ENCODE measurements at regions of chr9 and their contacts with region 1.

Region 1: GRCh38 chr9:107282753-107283625 is at the start of gene RAD23B:
- DNase-seq: peak; percentile 96
- ATAC-seq: peak; percentile 91
- H3K4me3 ChIP-seq: peak within 1 kb of the TSS; percentile 94
- H3K27ac ChIP-seq: peak within 1 kb of the TSS; percentile 93
- H3K4me1 ChIP-seq: peaks cover 29% of the 10 kb centered on the region
- H3K27me3 ChIP-seq: no peaks in the 10 kb centered on the region
- CTCF ChIP-seq: no peak
- total RNA-seq, gene RAD23B: 67.9 and 74.6 TPM in 2 replicates

Region 2: DNA sequence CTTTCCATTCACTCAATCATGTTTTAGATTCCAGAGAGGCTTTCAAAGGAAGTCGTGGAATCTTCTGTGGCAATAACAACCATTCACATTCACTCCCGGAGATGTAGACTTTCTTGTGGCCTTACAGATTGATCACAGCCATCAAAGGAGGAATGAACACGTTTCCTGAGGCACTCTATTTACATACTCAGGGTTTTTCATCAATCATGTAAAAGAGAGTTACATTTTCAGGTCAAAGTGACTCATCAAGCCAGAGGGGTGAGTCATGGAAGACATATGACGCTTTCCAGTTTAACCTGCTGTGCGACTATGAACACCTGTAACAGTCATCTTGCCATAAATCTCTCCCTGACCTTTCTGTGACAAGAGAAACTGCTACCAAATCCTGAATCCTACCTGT is 39.2 kb before region 1 on chr9:
- CTCF ChIA-PET with region 1: interaction called, 4 read pairs
- POLR2A ChIA-PET with region 1: interaction called, 3 read pairs
- intact Hi-C with region 1: loop called (anchors 1 kb)
- DNase-seq: peak; percentile 96
- ATAC-seq: peak; percentile 82
- H3K4me3 ChIP-seq: peak overlapping the region; percentile 12; the same call in 1 of the 2 replicates
- H3K27ac ChIP-seq: peak overlapping the region; percentile 87
- H3K4me1 ChIP-seq: peaks cover 38% of the 10 kb centered on the region
- H3K27me3 ChIP-seq: no peaks in the 10 kb centered on the region
- CTCF ChIP-seq: no peak

Region 3: DNA sequence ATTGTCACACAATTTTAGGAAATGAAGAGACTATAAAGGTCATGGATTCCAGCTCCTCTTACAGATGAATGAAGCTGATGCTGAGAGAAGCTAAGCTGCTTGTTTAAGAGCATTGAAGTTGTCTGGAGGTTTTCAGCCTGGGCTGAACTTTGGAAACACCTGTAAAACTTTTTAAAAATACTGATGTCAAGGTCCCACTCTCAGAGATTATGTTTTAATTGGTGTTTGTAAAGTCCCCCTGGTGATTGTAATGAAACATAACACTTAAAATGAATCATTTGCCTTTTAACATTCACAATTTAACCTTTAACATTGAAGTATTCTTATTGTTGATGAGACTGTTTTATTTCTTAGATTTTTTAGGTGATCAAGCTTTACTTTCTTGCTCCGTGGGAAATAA is 16.4 kb after region 1 on chr9:
- CTCF ChIA-PET with region 1: no interaction called
- POLR2A ChIA-PET with region 1: no interaction called
- intact Hi-C with region 1: no loop called
- DNase-seq: peak; percentile 7
- ATAC-seq: peak; percentile 45
- H3K4me3 ChIP-seq: no peak overlapping the region
- H3K27ac ChIP-seq: no peak overlapping the region
- H3K4me1 ChIP-seq: peaks cover 18% of the 10 kb centered on the region; the same call in 1 of the 2 replicates
- H3K27me3 ChIP-seq: no peaks in the 10 kb centered on the region
- CTCF ChIP-seq: peak; percentile 44

Measured in PC-3 (cell line).